ENCODE measurements at regions of chr18 and their contacts with region 1.

Region 1: DNA sequence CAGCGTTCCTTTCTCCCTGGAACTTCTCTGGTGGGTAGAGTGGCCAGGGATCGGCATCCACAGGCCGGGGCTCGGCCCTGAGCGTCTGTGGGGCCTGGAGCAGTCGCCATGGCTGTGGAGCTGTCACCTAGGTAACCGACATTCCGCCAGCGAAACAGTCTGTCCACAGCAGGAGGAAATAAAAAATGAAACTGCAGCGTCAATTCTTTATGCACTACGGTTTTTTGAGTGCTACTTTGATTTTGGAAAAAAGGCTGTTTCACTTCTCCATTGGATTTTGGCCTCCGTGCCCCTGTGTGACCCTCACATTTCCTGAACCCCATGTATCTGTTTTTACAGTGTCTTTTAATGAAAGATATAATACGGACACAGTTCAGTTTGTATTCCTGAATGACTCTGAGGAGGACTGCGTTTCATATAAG is 163.4 kb downstream of the LDLRAD4 start:
- DNase-seq: peak; percentile 76 to 82 (median 80)
- ATAC-seq: peak; percentile 72 to 84 (median 75)
- H3K4me3 ChIP-seq: peak overlapping the region in 9 of 12 donors; percentile 15 to 55 (median 39)
- H3K27ac ChIP-seq: peak overlapping the region; percentile 39 to 97 (median 80)
- H3K4me1 ChIP-seq: peaks cover 0 to 75% (median 59%) of the 10 kb centered on the region in 12 donors
- H3K27me3 ChIP-seq: no peaks in the 10 kb centered on the region
- CTCF ChIP-seq: no peak
- POLR2A ChIP-seq: no peak

Region 2: DNA sequence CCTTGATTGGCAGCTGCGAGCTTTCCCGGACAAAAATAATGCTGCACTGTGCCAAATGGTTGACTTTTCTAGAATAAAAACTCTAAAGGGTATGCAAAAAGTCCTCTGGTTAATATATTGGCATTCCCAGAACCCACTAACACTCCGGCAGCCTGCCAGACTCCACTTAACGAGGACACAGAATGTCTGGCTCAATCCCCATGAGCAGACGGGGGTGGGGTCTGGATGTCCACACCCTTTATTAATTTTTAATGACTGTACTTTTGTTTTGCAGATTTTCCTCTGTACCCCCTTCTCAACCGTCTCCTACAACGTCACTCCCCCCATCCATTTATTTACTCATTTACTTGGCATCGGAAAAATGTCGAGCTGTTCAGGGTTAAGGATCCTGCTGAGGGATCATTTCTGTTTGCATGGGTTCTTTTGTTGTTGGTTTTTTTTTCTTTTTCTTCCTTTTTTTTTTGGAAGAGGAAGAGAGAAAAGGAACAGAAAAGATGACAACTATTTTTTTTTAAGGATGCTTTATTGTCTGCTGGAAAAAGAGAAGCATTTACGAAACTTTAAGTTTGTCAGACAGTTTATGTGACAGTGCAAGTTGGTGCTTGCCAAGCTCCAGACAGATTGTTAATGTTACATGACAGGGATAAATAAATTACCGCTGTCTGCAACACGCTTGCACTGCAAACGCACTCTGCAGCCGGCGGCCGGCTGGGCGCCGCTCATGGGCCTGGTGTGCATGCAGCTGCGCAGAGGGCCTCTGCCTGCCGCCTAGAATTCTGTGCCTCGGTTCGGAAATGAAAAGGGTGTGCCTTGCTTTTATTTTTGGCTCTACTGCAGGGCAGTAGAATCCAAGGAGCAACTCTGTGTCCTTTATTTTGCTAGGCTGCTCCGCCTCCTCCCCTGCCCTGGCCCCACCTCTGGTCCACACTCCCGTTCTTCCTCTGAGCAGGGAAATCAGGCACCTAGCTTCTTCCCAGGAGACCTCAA is 159.8 kb before region 1 on chr18:
- intact Hi-C with region 1: loop called in 9 of 10 experiments (anchors 1 to 5 kb)
- DNase-seq: peak; percentile 77 to 90 (median 84)
- ATAC-seq: peak; percentile 33 to 68 (median 59)
- H3K4me3 ChIP-seq: peak overlapping the region in 10 of 12 donors; percentile 15 to 38 (median 20)
- H3K27ac ChIP-seq: peak overlapping the region; percentile 70 to 95 (median 91)
- H3K4me1 ChIP-seq: peaks cover 14 to 69% (median 58%) of the 10 kb centered on the region in 12 donors
- H3K27me3 ChIP-seq: no peaks in the 10 kb centered on the region
- CTCF ChIP-seq: no peak
- POLR2A ChIP-seq: no peak

Region 3: GRCh38 chr18:13425462-13426133 is 43.6 kb after region 1 on chr18:
- intact Hi-C with region 1: loop called in 2 of 10 experiments (anchors 5 kb)
- DNase-seq: no peak
- ATAC-seq: no peak
- H3K4me3 ChIP-seq: no peak overlapping the region
- H3K27ac ChIP-seq: peak overlapping the region in 1 of 12 donors; percentile 73
- H3K4me1 ChIP-seq: peaks cover 0 to 56% (median 34%) of the 10 kb centered on the region in 12 donors
- H3K27me3 ChIP-seq: no peaks in the 10 kb centered on the region
- CTCF ChIP-seq: no peak
- POLR2A ChIP-seq: no peak

Region 4: GRCh38 chr18:13500227-13500865 is 118.4 kb after region 1 on chr18:
- intact Hi-C with region 1: loop called in 1 of 10 experiments (anchors 10 kb)
- DNase-seq: peak; percentile 51 to 76 (median 66)
- ATAC-seq: peak; percentile 69 to 84 (median 80)
- H3K4me3 ChIP-seq: peak overlapping the region in 10 of 12 donors; percentile 7 to 47 (median 36)
- H3K27ac ChIP-seq: peak overlapping the region; percentile 35 to 93 (median 83)
- H3K4me1 ChIP-seq: peaks cover 5 to 50% (median 36%) of the 10 kb centered on the region in 12 donors
- H3K27me3 ChIP-seq: no peaks in the 10 kb centered on the region
- CTCF ChIP-seq: peak in 3 of 12 donors; percentile 23 to 29 (median 26)
- POLR2A ChIP-seq: peak in 1 of 2 donors; percentile 22

Region 5: GRCh38 chr18:13520306-13520705 is 138.4 kb after region 1 on chr18:
- intact Hi-C with region 1: loop called in 2 of 10 experiments (anchors 5 to 10 kb)
- DNase-seq: peak in 2 of 5 donors; percentile 67 to 77
- ATAC-seq: peak; percentile 89 to 93 (median 92)
- H3K4me3 ChIP-seq: no peak overlapping the region
- H3K27ac ChIP-seq: peak overlapping the region in 9 of 12 donors; percentile 20 to 87 (median 57)
- H3K4me1 ChIP-seq: peaks cover 0 to 27% (median 13%) of the 10 kb centered on the region in 12 donors
- H3K27me3 ChIP-seq: no peaks in the 10 kb centered on the region
- CTCF ChIP-seq: no peak
- POLR2A ChIP-seq: no peak